Endothelial cell of umbilical vein (primary cell): ENCODE measurements at regions of chr13 and their contacts with region 1.

Region 1: GRCh38 chr13:51070005-51070649 is 40.9 kb downstream of the C13orf42 start:
- DNase-seq: peak; percentile 76
- H3K4me3 ChIP-seq: no peak overlapping the region
- H3K27ac ChIP-seq: no peak overlapping the region
- H3K4me1 ChIP-seq: peaks cover 11% of the 10 kb centered on the region
- H3K27me3 ChIP-seq: peaks cover 3 to 9% of the 10 kb centered on the region in 2 experiments
- CTCF ChIP-seq: peak; percentile 92 to 94
- POLR2A ChIP-seq: no peak

Region 2: DNA sequence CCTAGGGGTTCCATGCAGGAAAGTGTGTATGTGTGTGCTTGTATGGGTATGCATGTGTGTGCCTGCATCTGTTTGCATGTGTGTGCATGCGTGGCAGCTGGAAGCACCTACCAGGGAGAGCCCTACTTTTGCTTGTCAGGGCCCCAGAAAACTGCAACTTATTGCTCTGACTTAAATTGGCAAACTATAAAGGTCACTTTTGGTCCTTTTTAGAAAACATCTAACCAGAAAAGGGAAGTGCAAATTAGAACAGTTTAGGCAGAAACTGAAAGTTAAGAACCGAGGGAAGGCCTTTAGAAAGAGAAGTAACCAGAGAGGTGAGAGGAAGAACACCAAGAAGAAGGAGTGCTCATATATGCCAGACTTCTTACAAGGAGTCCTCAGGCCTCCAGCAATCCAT is 259.1 kb before region 1 on chr13:
- CTCF ChIA-PET with region 1: interaction called, 3 read pairs
- POLR2A ChIA-PET with region 1: no interaction called
- dilution Hi-C with region 1: no loop called
- intact Hi-C with region 1: loop called (anchors 2 kb)
- DNase-seq: no peak
- H3K4me3 ChIP-seq: no peak overlapping the region
- H3K27ac ChIP-seq: no peak overlapping the region
- H3K4me1 ChIP-seq: no peaks in the 10 kb centered on the region
- H3K27me3 ChIP-seq: peaks cover 0 to 9% of the 10 kb centered on the region in 2 experiments
- CTCF ChIP-seq: no peak
- POLR2A ChIP-seq: no peak